ENCODE measurements at regions of chr2 and their contacts with region 1.

Region 1: DNA sequence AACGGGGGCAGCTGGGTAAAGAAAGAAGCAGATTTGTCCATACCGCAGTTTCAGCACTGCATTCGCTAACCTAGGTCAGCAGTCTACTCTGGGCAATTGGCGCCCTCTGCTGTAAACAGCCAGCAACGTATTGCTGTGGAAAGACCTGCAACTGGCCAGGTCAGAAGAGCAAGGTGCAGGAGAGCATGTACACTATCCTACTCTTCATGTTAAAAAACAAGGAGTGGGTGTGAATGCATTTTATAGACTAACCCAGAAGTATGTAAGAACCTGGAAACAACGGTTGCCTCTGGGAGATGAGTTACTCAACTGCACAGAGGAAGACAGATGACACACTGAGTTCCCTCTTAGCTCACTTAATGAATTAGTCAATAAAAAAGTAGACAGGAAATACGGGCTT is 6.2 kb downstream of the MRPS5 start:
- DNase-seq: peak; percentile 88
- H3K4me3 Mint-ChIP-seq: no peak overlapping the region
- H3K27ac Mint-ChIP-seq: peak overlapping the region; percentile 47
- H3K4me1 Mint-ChIP-seq: peaks cover 44% of the 10 kb centered on the region
- H3K27me3 Mint-ChIP-seq: no peaks in the 10 kb centered on the region

Region 2: GRCh38 chr2:95165129-95166064 is 50.0 kb after region 1 on chr2 and contains the start of gene ZNF2:
- CTCF ChIA-PET with region 1: interaction called, 10 read pairs
- DNase-seq: peak; percentile 99
- H3K4me3 Mint-ChIP-seq: peak within 1 kb of the TSS; percentile 98
- H3K27ac Mint-ChIP-seq: peak within 1 kb of the TSS; percentile 92
- H3K4me1 Mint-ChIP-seq: peaks cover 34% of the 10 kb centered on the region
- H3K27me3 Mint-ChIP-seq: no peaks in the 10 kb centered on the region

Region 3: GRCh38 chr2:95179451-95179850 is 64.0 kb after region 1 on chr2:
- CTCF ChIA-PET with region 1: no interaction called
- DNase-seq: no peak
- H3K4me3 Mint-ChIP-seq: no peak overlapping the region
- H3K27ac Mint-ChIP-seq: no peak overlapping the region
- H3K4me1 Mint-ChIP-seq: no peaks in the 10 kb centered on the region
- H3K27me3 Mint-ChIP-seq: no peaks in the 10 kb centered on the region